Activated T-helper 1 cell treated with anti-CD3 and anti-CD28 coated beads, Interleukin-12 subunit alpha, Interleukin-12 subunit beta, Interleukin-2, Interleukin-4 antibody, amounts not matched to agents 30 ng/mL and 10 ng/mL and 1 ng/mL, durations not matched to agents 14 hours and 24 hours and 36 hours (primary cell): ENCODE measurements at regions of chr14 and their contacts with region 1.

Region 1: DNA sequence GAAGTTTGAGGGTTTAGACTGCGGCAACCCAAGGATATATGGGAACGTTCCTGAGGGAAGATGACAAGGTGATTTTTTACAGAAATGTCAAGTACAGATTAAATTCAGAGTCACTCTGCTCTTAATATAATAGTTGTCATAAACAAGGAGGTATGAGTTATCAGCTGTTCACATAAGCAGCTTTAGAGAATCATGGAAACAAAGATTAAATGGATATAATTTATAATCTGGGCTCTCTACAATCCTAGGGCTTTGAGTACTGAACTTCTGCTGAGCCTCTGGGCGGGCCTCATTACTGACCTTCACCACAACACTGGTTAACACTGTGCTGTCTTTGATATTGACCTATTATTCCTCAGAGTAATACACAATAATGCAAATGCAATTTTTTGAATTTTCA is 577.8 kb downstream of the RPS29 start:
- DNase-seq: no peak
- H3K4me3 Mint-ChIP-seq: no peak overlapping the region
- H3K27ac Mint-ChIP-seq: no peak overlapping the region
- H3K4me1 Mint-ChIP-seq: no peaks in the 10 kb centered on the region
- H3K27me3 Mint-ChIP-seq: peaks cover 2% of the 10 kb centered on the region

Region 2: GRCh38 chr14:48890333-48890732 is 118.0 kb before region 1 on chr14:
- intact Hi-C with region 1: loop called (anchors 10 kb)
- DNase-seq: no peak
- H3K4me3 Mint-ChIP-seq: no peak overlapping the region
- H3K27ac Mint-ChIP-seq: no peak overlapping the region
- H3K4me1 Mint-ChIP-seq: no peaks in the 10 kb centered on the region
- H3K27me3 Mint-ChIP-seq: no peaks in the 10 kb centered on the region

Region 3: DNA sequence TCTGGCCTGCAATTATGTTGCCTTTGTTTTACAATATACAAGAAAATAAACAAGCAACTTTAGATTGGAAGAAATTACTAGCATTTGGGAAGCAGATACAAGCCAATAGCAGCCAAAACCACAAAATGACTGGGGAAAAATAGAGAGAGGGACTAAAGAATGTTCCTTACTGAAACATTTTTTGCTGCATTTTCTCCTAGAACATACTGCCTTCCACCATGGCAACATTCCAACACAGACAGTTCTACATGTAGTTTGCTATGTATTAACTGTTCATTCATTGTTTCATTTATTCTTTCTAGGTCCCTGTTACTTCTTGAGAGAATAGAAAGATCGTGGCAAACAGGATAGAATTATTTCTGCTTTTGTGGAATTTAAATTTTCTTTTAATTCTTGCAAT is 47.7 kb after region 1 on chr14:
- intact Hi-C with region 1: no loop called
- DNase-seq: no peak
- H3K4me3 Mint-ChIP-seq: no peak overlapping the region
- H3K27ac Mint-ChIP-seq: no peak overlapping the region
- H3K4me1 Mint-ChIP-seq: no peaks in the 10 kb centered on the region
- H3K27me3 Mint-ChIP-seq: no peaks in the 10 kb centered on the region